Activated CD4-positive, alpha-beta T cell treated with anti-CD3 and anti-CD28 coated beads, Interleukin-2, amount 10 ng/mL, durations not matched to agents 24 days and 14 days (primary cell): ENCODE measurements at regions of chrX and their contacts with region 1.

Region 1: DNA sequence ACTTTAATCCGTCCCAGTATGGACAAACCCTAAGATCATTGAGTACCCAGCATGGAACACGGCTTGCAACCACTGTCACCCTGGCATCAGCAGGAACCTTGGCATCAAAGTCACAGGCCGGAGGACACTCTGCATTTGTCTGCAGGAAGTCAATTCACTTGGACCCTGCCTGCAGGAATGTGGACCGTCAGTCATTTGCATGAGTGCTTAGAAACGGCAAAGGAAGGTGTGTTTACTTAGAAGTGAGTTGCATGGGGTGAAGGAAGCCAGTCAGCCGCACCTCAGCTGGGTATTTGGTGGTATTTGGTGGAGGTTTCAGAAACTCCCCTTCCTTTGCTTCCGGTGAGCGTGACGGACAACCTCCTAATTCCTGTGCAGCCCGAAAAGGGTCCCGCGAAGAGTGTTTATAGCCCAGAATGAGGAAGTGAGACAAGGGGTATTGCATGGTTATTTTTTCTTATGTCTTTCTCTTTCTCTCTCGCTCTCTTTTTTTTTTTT is 15.5 kb downstream of the P2RY8 start:
- DNase-seq: peak; percentile 91
- H3K4me3 Mint-ChIP-seq: peak overlapping the region; percentile 71
- H3K27ac Mint-ChIP-seq: peak overlapping the region; percentile 90
- H3K4me1 Mint-ChIP-seq: peaks cover 44% of the 10 kb centered on the region
- H3K27me3 Mint-ChIP-seq: no peaks in the 10 kb centered on the region

Region 2: DNA sequence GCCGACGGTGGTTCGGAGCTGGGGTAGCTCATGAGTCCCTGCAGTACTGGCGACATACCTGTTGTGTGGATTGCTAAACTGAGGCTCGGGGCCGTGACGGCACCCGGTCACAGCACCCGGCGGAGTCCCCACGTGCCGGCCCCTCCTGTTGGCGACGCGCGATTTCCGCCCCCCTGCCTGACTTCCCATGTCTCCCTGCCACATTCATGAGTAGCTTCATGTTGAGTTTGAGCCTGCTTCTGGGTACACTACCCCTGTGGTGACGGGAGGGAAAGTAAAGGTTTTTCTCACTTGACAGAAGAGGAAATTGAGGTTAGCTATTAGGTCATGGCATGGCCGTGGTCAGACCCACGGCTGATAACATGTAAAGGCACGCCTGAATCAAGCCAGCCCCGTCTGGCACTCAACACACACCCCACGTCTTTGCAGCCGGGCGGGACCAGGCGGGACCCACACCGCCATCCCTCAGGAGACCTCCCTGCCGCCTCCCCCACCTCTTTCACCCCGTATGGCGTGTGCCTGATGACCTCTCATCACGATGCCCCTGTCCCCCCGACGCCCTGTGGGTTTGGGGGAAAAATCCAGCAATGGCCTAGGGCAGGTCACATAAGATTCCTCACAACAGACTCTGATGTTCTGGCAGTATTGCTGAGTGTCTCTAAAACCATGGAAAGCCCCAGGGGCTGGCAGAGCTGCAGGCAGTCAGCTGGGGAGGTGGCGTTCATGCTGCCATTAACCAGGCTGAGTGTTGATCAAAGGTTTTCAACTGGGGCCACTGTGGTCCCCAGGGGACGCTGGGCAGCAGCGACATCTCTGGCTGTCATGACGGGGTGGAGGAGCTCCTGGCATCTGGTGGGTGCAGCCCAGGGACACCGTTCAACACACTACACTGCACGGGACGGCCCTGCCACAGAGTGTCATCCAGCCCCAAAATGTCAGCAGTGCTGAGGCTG is 13.7 kb before region 1 on chrX:
- intact Hi-C with region 1: loop called (anchors 2 kb)
- DNase-seq: peak; percentile 58
- H3K4me3 Mint-ChIP-seq: no peak overlapping the region
- H3K27ac Mint-ChIP-seq: peak overlapping the region; percentile 63
- H3K4me1 Mint-ChIP-seq: peaks cover 22% of the 10 kb centered on the region
- H3K27me3 Mint-ChIP-seq: no peaks in the 10 kb centered on the region